ENCODE measurements at regions of chr10 and their contacts with region 1.

Region 1: GRCh38 chr10:80599424-80599847 is 61.7 kb downstream of the SH2D4B start:
- DNase-seq: peak; percentile 25
- H3K4me3 ChIP-seq: no peak overlapping the region
- H3K27ac ChIP-seq: no peak overlapping the region
- H3K4me1 ChIP-seq: no peaks in the 10 kb centered on the region
- H3K27me3 ChIP-seq: no peaks in the 10 kb centered on the region
- CTCF ChIP-seq: peak; percentile 91 to 93

Region 2: DNA sequence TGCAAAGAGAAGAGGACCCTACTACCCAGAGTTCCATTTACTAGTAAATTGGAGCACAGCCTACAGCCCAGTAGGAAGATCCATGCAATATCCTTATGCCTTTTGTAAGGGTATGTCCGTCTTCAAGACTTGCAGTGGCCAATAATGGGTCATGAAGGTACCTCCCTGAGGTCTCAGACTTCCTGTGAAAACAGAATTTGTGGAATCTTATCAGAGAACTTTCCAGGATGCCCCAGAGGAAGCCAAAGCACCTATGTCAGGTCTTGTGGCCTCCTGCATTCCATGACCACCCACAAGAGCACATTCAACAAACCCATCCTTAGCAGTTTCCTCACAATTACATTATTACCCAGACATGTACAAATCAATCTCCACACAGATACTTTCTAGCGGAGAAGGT is 209.6 kb before region 1 on chr10:
- CTCF ChIA-PET with region 1: interaction called, 6 read pairs
- dilution Hi-C with region 1: no loop called
- in situ Hi-C with region 1: no loop called
- intact Hi-C with region 1: loop called (anchors 5 kb)
- DNase-seq: no peak
- H3K4me3 ChIP-seq: no peak overlapping the region
- H3K27ac ChIP-seq: no peak overlapping the region
- H3K4me1 ChIP-seq: peaks cover 6% of the 10 kb centered on the region
- H3K27me3 ChIP-seq: no peaks in the 10 kb centered on the region
- CTCF ChIP-seq: no peak

Region 3: DNA sequence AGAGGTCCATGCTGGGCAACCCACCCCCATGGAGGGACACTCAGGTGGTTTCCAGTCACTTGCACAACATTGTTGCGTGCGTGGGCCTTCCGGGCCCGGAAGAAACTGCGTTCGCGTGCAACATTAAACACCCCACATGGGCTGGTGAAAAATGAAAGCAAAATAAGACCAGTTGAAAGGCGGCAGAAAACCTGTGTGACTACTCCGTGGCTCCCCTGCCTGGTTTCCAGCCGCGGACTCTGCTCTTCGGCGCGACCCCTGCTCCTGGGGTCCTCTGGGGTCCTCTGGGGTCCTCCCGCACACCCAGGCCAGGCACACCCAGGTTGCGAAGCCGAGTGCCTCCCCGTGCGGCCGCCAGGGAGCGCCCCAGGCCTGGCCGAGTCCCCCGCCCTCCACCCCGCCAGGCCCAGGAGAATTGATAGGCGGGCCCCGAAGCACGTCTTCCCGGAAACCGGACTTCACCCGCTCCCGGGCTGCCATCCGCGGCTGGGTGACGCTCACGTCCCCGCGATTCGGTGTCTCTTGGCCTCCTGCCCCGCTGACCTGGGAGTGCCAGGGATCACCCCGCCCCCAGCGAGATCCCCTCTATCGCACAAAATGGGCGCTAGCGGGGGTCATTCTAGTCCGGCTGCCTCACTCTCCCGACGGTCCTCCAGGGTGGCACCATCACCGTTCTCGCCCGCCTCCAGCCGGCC is 63.6 kb before region 1 on chr10:
- CTCF ChIA-PET with region 1: no interaction called
- dilution Hi-C with region 1: no loop called
- in situ Hi-C with region 1: no loop called
- intact Hi-C with region 1: loop called (anchors 5 kb)
- DNase-seq: peak; percentile 34
- H3K4me3 ChIP-seq: peak overlapping the region; percentile 9 to 50 (median 35)
- H3K27ac ChIP-seq: peak overlapping the region; percentile 13
- H3K4me1 ChIP-seq: peaks cover 25% of the 10 kb centered on the region
- H3K27me3 ChIP-seq: no peaks in the 10 kb centered on the region
- CTCF ChIP-seq: peak; percentile 39 to 72